ENCODE measurements at regions of chr9 and their contacts with region 1.

Region 1: GRCh38 chr9:70229579-70229978 is 29.2 kb upstream of the SMC5 start:
- DNase-seq: no peak
- H3K4me3 ChIP-seq: no peak overlapping the region
- CTCF ChIP-seq: peak; percentile 35

Region 2: DNA sequence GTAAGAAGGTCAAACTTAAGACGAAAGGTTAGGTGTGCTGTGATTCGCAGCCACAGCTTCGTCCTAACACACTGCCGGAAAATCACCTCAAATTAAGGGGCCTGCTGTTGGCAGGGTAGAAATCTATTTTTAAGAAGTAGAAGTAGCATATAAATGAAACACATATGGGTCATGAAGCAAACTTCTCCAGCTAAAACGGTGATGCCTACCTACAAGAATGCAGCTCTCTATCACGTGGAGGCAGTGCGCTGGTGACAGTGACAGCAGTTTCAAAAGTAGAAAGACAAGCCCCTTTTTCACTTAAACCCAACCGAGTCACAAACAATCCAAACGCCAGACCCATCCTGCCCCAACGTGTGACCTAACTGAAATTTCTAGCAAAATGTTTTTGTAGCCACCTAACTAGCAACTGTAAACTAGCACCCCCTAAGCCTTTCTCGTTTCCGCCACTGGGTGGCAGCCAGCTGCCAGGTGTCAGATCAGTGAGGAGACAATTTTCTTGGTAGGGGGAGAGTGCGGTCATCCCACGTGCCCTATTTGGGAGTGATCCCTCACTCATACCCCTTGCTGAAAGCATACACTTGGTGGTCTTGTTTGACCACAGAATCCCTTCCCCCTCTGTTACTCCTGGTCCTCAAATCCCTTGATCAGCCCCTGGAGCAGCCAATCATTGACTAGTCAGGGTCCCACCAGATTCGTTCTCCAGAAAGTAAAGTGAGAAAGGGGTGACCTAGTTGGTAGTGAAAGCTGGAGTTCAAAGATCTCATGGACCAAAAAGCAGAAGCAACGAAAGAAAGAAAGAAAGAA is 257.7 kb before region 1 on chr9:
- CTCF ChIA-PET with region 1: interaction called, 25 read pairs
- POLR2A ChIA-PET with region 1: no interaction called
- DNase-seq: no peak
- H3K4me3 ChIP-seq: no peak overlapping the region
- CTCF ChIP-seq: peak; percentile 84

Region 3: GRCh38 chr9:70013598-70014196 is 215.9 kb before region 1 on chr9:
- CTCF ChIA-PET with region 1: no interaction called
- POLR2A ChIA-PET with region 1: no interaction called
- DNase-seq: no peak
- H3K4me3 ChIP-seq: no peak overlapping the region
- CTCF ChIP-seq: no peak

Region 4: GRCh38 chr9:70080481-70081119 is 149.0 kb before region 1 on chr9:
- CTCF ChIA-PET with region 1: no interaction called
- POLR2A ChIA-PET with region 1: no interaction called
- DNase-seq: no peak
- H3K4me3 ChIP-seq: no peak overlapping the region
- CTCF ChIP-seq: no peak

Region 5: DNA sequence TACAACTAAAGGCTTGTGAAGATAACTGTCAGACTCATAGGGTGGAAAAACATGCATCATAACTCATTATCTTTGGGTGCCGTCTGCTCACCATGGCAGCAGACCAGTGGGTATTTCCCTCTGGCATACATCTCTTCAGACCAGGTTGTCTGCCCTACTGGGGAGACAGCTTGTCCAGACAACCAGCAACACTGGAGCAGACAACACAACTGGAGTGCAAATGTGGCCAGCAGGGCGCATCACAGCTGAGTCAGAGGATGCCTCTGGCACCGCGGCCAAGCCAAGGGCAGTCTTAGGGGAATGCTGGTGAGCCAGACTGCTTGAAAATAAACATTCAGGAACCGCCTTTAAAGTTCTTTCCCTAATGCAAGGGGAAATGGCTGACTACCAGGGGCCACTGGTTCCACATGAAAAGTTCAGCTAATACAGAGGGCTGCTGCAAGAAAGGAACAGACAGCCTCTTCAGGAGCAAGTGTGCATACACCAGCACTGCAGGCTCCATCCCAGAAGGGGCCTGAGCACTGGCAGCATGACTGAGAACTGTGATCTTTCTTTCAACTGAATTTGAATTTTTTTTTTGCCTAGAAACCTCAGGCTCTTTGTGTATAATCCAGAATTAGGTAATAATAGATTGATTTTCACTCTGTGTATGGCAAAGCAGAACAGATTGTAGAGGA is 108.6 kb before region 1 on chr9:
- CTCF ChIA-PET with region 1: interaction called, 45 read pairs
- POLR2A ChIA-PET with region 1: no interaction called
- DNase-seq: peak; percentile 85
- H3K4me3 ChIP-seq: no peak overlapping the region
- CTCF ChIP-seq: peak; percentile 58

Region 6: DNA sequence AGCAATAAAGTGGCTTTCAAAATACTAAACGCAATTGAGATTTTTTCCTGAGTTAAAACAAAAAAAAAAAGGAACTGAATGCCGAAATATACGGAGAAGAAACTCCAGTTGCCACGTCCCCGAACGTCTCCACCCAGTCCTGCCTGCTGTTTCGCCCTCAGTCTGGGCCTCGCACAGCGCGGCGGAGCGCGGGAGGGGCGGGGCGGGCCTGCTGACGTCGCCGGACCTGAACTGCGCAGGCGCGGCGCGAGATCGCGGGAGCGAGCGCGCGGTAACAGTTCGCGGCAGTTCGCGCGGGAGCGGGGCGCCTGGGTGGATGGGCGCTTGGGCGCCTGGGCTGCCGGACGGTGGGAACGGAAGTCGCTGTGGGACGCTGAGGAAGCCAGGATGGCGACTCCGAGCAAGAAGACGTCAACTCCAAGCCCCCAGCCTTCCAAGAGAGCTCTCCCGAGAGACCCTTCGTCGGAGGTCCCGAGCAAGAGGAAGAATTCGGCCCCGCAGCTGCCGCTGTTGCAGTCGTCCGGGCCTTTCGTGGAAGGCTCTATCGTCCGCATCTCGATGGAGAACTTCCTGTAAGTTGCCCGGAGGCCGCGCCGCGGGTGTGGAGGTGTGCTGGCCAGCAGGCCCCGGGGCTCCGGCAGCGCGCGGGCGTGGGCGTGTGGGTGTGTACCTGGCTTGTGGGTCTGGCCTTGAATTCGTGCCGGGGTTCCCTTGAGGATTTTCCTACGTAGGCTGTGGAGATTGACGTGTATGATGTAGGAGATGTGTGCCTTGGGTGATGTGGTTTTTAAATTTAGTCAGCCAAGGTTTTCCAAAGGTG is 29.3 kb after region 1 on chr9 and contains the start of gene SMC5:
- CTCF ChIA-PET with region 1: interaction called, 14 read pairs
- POLR2A ChIA-PET with region 1: no interaction called
- DNase-seq: no peak
- H3K4me3 ChIP-seq: peak within 1 kb of the TSS; percentile 87
- CTCF ChIP-seq: no peak

Region 7: DNA sequence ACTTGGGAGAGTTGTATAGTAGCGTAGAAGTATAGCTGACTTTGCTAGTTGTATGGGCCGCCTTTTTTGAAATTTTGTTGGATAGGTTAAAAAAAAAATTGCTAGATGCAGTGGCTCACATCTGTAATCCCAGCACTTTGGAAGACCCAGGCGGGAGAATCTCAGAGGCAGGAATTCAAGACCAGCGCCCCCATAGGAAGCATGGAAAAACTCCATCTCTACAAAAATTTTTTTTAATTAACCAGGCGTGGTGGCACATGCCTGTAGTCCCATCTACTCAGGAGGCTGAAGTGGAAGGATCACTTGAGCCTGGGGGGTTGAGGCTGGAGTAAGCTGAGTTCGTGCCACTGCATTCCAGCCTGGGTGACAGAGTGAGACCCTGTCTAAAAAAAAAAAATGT is 88.4 kb after region 1 on chr9:
- CTCF ChIA-PET with region 1: no interaction called
- POLR2A ChIA-PET with region 1: no interaction called
- DNase-seq: no peak
- H3K4me3 ChIP-seq: no peak overlapping the region
- CTCF ChIP-seq: no peak